Activated CD4-positive, alpha-beta T cell treated with anti-CD3 and anti-CD28 coated beads, Interleukin-2, amount 10 ng/mL, durations not matched to agents 24 days and 14 days (primary cell): ENCODE measurements at regions of chrX and their contacts with region 1.

Region 1: GRCh38 chrX:48897621-48898306 is at the starts of genes PQBP1 and TIMM17B:
- DNase-seq: peak; percentile 96
- H3K4me3 Mint-ChIP-seq: peak within 1 kb of the TSS; percentile 83
- H3K27ac Mint-ChIP-seq: peak within 1 kb of the TSS; percentile 95
- H3K4me1 Mint-ChIP-seq: peaks cover 16% of the 10 kb centered on the region
- H3K27me3 Mint-ChIP-seq: no peaks in the 10 kb centered on the region
- total RNA-seq, gene PQBP1: 104 and 114 TPM in 2 replicates
- total RNA-seq, gene TIMM17B: 72.0 and 75.1 TPM in 2 replicates

Region 2: GRCh38 chrX:48648336-48648751 is 249.4 kb before region 1 on chrX:
- intact Hi-C with region 1: loop called (anchors 10 kb)
- DNase-seq: peak; percentile 78
- H3K4me3 Mint-ChIP-seq: no peak overlapping the region
- H3K27ac Mint-ChIP-seq: no peak overlapping the region
- H3K4me1 Mint-ChIP-seq: peaks cover 6% of the 10 kb centered on the region
- H3K27me3 Mint-ChIP-seq: no peaks in the 10 kb centered on the region

Region 3: DNA sequence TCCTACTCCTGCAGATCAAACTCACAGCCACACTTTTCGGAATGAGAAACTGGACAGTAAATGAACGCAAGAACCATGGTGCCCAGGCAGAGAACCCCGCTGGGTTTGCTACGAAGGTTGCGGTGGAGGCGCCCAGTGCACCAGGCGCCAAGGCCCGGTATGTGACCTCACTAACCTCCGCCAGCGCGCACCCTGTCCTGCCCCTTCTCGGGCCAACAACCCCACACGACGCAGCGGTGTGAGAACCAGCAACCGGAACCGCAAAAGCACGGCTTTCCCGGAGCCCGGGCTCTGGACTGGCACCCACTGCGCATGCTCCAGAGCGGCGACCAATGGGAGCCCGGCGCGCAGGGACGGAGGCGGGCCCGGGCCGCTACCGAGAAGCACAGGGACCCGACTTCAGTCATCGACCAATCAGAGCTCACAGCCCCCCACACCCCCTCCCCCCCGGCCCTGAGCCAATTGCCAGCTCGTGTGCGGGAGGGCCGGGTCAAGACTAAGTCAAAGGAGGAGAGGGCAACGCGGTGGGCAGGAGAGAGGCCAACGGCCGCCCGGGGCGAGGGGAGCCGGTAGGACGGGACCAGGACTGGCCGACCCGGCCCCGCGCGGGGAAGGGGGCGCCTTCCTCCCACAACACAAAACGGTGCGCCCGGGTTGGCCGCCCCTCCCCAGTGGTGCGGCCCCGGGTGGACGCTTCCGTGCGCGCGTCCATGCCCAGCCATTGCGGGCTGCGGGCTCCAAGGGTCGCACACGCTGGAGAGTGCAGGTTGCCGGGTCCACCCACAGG is 221.5 kb before region 1 on chrX:
- intact Hi-C with region 1: loop called (anchors 10 kb)
- DNase-seq: peak; percentile 96
- H3K4me3 Mint-ChIP-seq: peak overlapping the region; percentile 95
- H3K27ac Mint-ChIP-seq: peak overlapping the region; percentile 93
- H3K4me1 Mint-ChIP-seq: peaks cover 14% of the 10 kb centered on the region
- H3K27me3 Mint-ChIP-seq: no peaks in the 10 kb centered on the region

Region 4: DNA sequence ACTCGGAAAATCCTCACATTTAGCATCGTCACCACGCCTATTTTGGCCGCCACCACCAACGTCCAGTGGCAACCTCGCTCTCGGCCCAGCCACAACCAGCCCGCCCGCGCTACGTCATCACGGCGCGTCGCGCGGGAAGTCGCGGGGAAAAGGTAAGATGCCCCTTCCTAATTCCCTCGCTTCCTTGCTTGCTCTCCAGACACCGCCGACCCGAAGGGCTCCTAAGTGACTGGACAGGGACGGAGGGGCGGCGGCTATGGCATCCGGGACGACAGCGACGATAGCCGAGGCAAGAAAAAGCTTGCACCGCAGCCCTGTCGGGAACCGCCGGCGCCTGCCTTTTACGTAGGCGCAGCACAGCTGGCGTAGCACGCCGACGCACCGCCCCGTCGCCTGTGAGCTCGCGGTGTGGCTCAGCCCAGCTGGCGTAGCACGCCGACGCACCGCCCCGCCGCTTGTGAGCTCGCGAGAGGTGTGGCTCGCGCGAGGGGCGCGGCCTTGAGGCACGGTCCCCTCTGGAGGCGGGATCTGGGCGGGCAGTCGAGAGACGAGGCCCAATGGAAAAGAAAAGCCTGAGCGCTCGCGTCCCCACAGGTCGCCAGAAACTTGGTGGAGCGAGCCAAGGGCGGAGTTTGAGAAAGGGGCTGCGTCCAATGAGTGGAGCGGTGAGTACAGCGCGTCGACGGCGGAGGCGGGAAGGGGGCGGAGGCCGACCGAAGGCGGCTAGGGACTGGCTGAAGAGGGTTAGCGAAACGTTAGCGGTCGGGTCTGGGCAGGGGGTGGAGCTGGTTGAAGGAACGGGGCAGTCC is 96.3 kb before region 1 on chrX and contains the start of gene HDAC6:
- intact Hi-C with region 1: loop called (anchors 1 kb)
- DNase-seq: peak; percentile 98
- H3K4me3 Mint-ChIP-seq: peak within 1 kb of the TSS; percentile 96
- H3K27ac Mint-ChIP-seq: peak within 1 kb of the TSS; percentile 96
- H3K4me1 Mint-ChIP-seq: peaks cover 16% of the 10 kb centered on the region
- H3K27me3 Mint-ChIP-seq: no peaks in the 10 kb centered on the region
- total RNA-seq, gene HDAC6: 50.6 and 55.2 TPM in 2 replicates

Region 5: DNA sequence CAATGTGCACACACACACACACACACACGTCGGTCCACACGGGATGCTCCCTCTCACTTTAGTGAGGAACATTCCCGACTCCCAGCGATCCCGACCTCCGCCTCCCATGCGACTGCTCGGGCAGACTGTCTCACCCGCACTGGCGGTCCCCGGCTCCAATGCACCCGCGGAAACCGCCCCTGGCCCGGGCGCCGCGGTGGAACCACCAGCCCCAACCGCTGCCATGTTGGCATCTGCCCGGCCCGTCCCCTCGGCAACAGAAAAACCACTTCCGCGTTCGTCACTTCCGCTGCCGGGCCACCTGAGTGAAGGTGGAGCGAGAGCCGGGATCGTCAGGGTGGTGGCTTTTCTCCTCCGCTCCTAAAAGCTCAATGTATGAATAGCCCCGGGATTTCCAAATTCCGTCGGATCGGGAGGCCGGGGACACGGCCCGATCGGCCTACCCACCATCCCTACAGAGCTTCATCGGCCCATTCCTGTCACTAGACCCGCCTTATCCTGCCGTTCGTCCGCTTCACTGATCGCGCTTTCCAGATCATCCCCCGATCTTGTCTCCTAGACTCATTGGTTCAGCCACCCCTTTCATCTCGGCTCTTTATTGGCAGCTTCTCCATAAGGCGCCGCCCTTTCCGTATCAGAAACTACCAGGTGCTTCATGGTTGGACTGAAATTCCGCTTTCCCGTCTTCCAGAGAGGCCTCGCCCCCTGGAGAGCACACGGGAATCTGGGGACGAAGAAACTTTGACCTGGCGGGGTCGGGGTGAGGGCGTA is 13.8 kb after region 1 on chrX and contains the start of gene SLC35A2:
- intact Hi-C with region 1: loop called (anchors 1 kb)
- DNase-seq: peak; percentile 97
- H3K4me3 Mint-ChIP-seq: peak within 1 kb of the TSS; percentile 96
- H3K27ac Mint-ChIP-seq: peak within 1 kb of the TSS; percentile 96
- H3K4me1 Mint-ChIP-seq: peaks cover 30% of the 10 kb centered on the region
- H3K27me3 Mint-ChIP-seq: no peaks in the 10 kb centered on the region
- total RNA-seq, gene SLC35A2: 19.5 and 22.8 TPM in 2 replicates

Region 6: GRCh38 chrX:48957827-48958634 is 60.3 kb after region 1 on chrX:
- intact Hi-C with region 1: loop called (anchors 5 kb)
- DNase-seq: peak; percentile 97
- H3K4me3 Mint-ChIP-seq: peak overlapping the region; percentile 98
- H3K27ac Mint-ChIP-seq: peak overlapping the region; percentile 100
- H3K4me1 Mint-ChIP-seq: peaks cover 36% of the 10 kb centered on the region
- H3K27me3 Mint-ChIP-seq: no peaks in the 10 kb centered on the region

Region 7: GRCh38 chrX:49043220-49043986 is 145.6 kb after region 1 on chrX and contains the start of gene TFE3:
- intact Hi-C with region 1: loop called (anchors 5 kb)
- DNase-seq: peak; percentile 98
- H3K4me3 Mint-ChIP-seq: peak within 1 kb of the TSS; percentile 88
- H3K27ac Mint-ChIP-seq: peak within 1 kb of the TSS; percentile 95
- H3K4me1 Mint-ChIP-seq: peaks cover 31% of the 10 kb centered on the region
- H3K27me3 Mint-ChIP-seq: no peaks in the 10 kb centered on the region
- total RNA-seq, gene TFE3: 28.8 and 30.8 TPM in 2 replicates

Region 8: DNA sequence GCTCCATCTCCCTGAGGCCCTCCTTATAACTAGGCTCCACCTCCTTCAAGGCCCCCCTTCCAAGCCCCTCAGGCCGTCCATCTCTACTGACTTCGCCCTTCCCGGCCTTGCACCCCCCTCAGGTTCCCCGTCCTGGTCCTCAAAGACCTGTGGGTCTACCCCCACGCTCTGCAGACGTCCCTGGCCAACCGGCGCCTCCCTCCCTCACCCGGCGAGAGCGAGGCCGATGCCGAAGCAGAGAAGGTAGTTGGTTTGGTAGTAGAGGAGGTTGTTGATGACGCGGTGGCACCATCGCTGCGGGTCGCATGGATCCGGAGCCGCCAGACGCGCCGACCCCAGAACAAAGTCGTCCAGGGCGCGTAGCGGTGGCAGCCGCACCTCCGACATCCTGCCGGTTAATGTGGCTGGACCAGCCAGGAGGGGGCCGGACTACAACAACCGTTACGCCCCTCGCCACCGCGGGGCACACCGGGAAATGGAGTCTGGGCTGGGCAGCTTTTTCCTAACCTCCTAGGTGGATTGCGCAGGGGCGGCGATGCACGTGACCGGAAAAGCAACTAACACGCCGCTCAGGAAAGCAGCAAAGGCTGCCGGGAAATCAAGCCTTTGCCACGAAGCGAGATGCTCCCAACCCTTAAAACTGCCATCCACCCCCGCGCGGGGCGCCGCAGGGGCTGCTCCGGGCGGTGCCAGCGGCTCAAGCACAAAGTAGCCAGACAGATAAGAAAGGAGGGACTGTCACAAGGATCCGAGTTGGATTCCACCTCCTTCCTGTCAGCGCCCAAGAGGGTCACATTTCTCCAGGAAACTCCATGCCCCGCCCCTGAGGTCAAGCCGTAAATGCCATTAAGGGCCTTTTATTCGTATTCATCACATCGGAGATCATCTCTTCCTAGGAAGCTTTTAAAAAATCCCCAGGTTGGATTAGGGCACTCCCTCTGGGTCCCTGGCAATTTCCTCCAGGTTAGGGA is 176.1 kb after region 1 on chrX and contains the start of gene PRAF2:
- intact Hi-C with region 1: no loop called
- DNase-seq: peak; percentile 96
- H3K4me3 Mint-ChIP-seq: peak within 1 kb of the TSS; percentile 84
- H3K27ac Mint-ChIP-seq: peak within 1 kb of the TSS; percentile 78
- H3K4me1 Mint-ChIP-seq: peaks cover 16% of the 10 kb centered on the region
- H3K27me3 Mint-ChIP-seq: no peaks in the 10 kb centered on the region
- total RNA-seq, gene PRAF2: 12.5 and 15.9 TPM in 2 replicates